ENCODE measurements at regions of chr7 and their contacts with region 1.

Region 1: DNA sequence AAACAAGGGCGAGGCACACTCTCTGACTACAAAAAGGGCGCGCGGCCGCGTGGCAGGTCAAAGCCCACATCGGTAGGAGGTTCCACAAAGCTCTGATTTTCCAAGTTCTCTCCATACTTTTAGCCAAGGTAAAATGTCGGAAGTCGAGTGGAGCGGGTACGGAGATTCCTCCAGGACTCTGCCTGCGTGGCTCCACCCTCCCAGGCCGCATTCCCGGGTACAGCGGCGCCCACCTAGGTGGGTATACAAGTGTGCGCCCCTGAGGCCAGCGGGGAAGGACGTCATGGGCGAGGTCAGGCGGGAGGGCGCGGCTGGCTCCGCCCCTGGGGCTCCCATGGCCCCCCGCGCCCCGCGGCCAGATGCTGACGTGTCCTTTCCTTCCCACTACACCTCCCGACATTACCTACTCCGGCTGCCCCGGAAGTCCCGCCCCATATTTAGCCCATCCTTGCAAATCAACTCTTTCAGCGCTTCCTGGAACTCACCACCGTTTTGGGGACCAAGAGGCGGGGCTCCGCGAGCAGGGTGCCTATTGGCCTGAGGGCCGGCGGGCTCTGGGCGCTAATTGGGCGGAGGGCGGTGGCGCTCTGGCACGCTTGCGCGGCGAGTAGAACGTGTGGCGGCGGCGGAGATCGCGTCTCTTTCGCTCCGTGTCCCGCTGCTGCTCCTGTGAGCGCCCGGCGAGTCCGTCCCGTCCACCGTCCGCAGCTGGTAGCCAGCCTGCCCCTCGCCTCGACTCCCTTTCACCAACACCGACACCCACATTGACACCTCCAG is at the start of gene SND1:
- DNase-seq: peak; percentile 100
- H3K4me3 ChIP-seq: peak within 1 kb of the TSS; percentile 98
- H3K4me3 Mint-ChIP-seq: no peak within 1 kb of the TSS
- H3K27ac Mint-ChIP-seq: no peak within 1 kb of the TSS
- H3K4me1 ChIP-seq: peaks cover 13% of the 10 kb centered on the region
- H3K4me1 Mint-ChIP-seq: peaks cover 18% of the 10 kb centered on the region
- H3K27me3 ChIP-seq: no peaks in the 10 kb centered on the region
- H3K27me3 Mint-ChIP-seq: no peaks in the 10 kb centered on the region
- CTCF ChIP-seq: no peak
- total RNA-seq, gene SND1: 274 and 276 TPM in 2 replicates

Region 2: GRCh38 chr7:127392566-127393367 is 259.0 kb before region 1 on chr7 and contains the start of gene ZNF800:
- CTCF ChIA-PET with region 1: no interaction called
- POLR2A ChIA-PET with region 1: no interaction called
- intact Hi-C with region 1: loop called (anchors 5 kb)
- DNase-seq: peak; percentile 89 to 92
- H3K4me3 ChIP-seq: peak within 1 kb of the TSS; percentile 73
- H3K4me3 Mint-ChIP-seq: peak within 1 kb of the TSS; percentile 97
- H3K27ac Mint-ChIP-seq: peak within 1 kb of the TSS; percentile 93
- H3K4me1 ChIP-seq: no peaks in the 10 kb centered on the region
- H3K4me1 Mint-ChIP-seq: peaks cover 7% of the 10 kb centered on the region
- H3K27me3 ChIP-seq: no peaks in the 10 kb centered on the region
- H3K27me3 Mint-ChIP-seq: peaks cover 8% of the 10 kb centered on the region
- CTCF ChIP-seq: no peak
- total RNA-seq, gene ZNF800: 17.3 and 18.7 TPM in 2 replicates

Region 3: GRCh38 chr7:127585044-127585953 is 66.4 kb before region 1 on chr7 and contains the start of gene GCC1:
- CTCF ChIA-PET with region 1: interaction called, 4 read pairs
- POLR2A ChIA-PET with region 1: interaction called, 8 read pairs
- intact Hi-C with region 1: loop called (anchors 1 kb)
- DNase-seq: peak; percentile 91 to 96
- H3K4me3 ChIP-seq: peak within 1 kb of the TSS; percentile 94
- H3K4me3 Mint-ChIP-seq: peak within 1 kb of the TSS; percentile 83
- H3K27ac Mint-ChIP-seq: peak within 1 kb of the TSS; percentile 87
- H3K4me1 ChIP-seq: peaks cover 30% of the 10 kb centered on the region
- H3K4me1 Mint-ChIP-seq: peaks cover 34% of the 10 kb centered on the region
- H3K27me3 ChIP-seq: no peaks in the 10 kb centered on the region
- H3K27me3 Mint-ChIP-seq: no peaks in the 10 kb centered on the region
- CTCF ChIP-seq: no peak
- total RNA-seq, gene GCC1: 23.0 and 26.6 TPM in 2 replicates

Region 4: GRCh38 chr7:127667017-127667670 is 15.4 kb after region 1 on chr7:
- CTCF ChIA-PET with region 1: no interaction called
- POLR2A ChIA-PET with region 1: no interaction called
- intact Hi-C with region 1: loop called (anchors 1 kb)
- DNase-seq: no peak
- H3K4me3 ChIP-seq: no peak overlapping the region
- H3K4me3 Mint-ChIP-seq: no peak overlapping the region
- H3K27ac Mint-ChIP-seq: peak overlapping the region; percentile 23
- H3K4me1 ChIP-seq: no peaks in the 10 kb centered on the region
- H3K4me1 Mint-ChIP-seq: peaks cover 14% of the 10 kb centered on the region
- H3K27me3 ChIP-seq: no peaks in the 10 kb centered on the region
- H3K27me3 Mint-ChIP-seq: no peaks in the 10 kb centered on the region
- CTCF ChIP-seq: no peak

Measured in Caco-2 (cell line).